Posterior cingulate gyrus (tissue), 11 donors: ENCODE measurements at regions of chr19 and their contacts with region 1.

Region 1: GRCh38 chr19:43595999-43596841 is at the starts of genes IRGQ and ZNF576:
- DNase-seq: peak; percentile 98 to 100 (median 100)

Region 2: DNA sequence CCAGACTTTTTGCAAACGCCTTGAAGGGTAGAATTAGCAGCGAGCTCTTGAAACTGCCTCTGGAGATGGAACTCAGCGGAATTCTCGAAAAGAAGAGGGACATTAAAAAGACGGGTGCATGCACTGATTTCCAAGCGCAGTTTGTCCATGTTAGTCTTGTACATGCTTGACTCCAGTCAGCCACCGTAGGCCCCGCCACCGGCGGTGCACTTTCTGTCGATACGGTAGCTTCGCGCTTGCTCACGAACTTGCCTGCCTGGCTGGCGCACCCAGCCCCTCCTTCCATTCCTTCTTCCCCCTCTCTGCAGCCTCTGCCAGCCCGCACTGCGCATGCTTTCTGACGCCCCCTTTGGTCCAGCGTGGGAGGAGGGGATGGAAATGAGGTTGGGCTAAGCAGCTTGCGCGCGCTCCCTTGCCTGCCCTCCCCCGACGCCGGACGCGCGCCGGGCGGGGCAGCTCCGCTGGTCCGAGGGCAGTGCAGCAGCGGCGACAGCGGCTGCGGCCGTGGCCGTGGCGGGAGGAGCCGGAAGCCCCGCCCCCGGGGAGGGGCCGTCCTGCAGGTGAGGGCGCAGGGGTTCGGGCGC is 63.2 kb before region 1 on chr19 and contains the start of gene ZNF575:
- intact Hi-C with region 1: loop called (anchors 5 kb)
- DNase-seq: peak; percentile 83 to 99 (median 92)

Region 3: GRCh38 chr19:43575156-43575950 is 20.9 kb before region 1 on chr19 and contains the starts of genes PINLYP and XRCC1:
- intact Hi-C with region 1: loop called (anchors 1 kb)
- DNase-seq: peak; percentile 93 to 100 (median 96)

Region 4: GRCh38 chr19:43700395-43701000 is 104.3 kb after region 1 on chr19:
- intact Hi-C with region 1: no loop called
- DNase-seq: peak in 7 of 10 donors; percentile 17 to 62 (median 27)